Activated CD4-positive, alpha-beta T cell treated with anti-CD3 and anti-CD28 coated beads, Interleukin-2, amount 10 ng/mL, durations not matched to agents 7 days and 5 days (primary cell): ENCODE measurements at regions of chr15 and their contacts with region 1.

Region 1: DNA sequence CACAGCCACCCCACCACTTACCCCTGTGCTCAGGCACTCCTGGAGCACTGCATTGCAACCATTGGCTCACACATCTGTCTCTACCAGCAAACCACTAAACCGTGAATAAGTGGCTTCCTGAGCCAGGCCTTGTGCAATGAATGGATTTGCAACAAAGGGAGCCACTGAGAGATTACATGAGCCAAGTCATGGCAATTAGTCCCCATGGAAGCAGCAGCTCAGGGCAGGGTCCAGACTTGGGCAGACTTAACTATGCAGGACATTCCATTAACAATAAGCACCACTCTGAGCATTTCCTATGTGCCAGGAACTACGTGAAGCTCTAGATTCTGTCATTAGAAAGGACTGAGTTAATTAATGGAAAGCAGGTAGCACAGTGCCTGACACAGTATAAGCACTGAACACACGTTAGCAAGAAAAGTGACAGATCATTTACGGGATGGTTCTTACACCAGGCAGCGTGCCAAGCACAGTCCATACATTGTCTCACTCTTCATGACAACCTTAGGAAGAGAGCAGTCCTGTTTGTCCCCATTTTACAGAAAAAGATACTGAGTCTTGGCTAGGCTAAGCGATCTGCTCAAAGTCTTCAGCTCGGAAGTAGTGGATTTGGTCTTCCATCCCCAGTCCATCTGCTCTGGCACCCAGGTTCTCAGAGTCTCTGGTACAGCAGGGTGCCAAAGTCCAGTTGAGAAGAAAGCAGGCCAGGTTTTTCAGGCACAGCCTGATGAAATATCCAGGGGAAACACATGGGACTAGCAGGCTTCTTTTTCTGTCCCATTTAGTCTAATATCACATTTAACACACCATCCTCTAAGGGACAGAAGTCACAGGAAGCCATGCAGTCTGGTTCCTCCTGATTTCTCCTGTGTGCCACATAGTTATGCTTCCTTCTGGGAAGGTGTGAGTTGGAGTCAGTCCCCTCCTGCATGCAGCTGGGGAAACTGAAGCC is 44.1 kb downstream of the LIPC start:
- DNase-seq: no peak
- H3K4me3 Mint-ChIP-seq: no peak overlapping the region
- H3K27ac Mint-ChIP-seq: peak overlapping the region; percentile 79
- H3K4me1 Mint-ChIP-seq: peaks cover 61% of the 10 kb centered on the region
- H3K27me3 Mint-ChIP-seq: no peaks in the 10 kb centered on the region

Region 2: GRCh38 chr15:58447271-58448010 is 28.4 kb before region 1 on chr15:
- CTCF ChIA-PET with region 1: no interaction called
- POLR2A ChIA-PET with region 1: no interaction called
- DNase-seq: no peak
- H3K4me3 Mint-ChIP-seq: no peak overlapping the region
- H3K27ac Mint-ChIP-seq: peak overlapping the region; percentile 60
- H3K4me1 Mint-ChIP-seq: peaks cover 21% of the 10 kb centered on the region
- H3K27me3 Mint-ChIP-seq: no peaks in the 10 kb centered on the region

Region 3: GRCh38 chr15:58462547-58462946 is 13.3 kb before region 1 on chr15:
- CTCF ChIA-PET with region 1: interaction called, 15 read pairs
- POLR2A ChIA-PET with region 1: no interaction called
- DNase-seq: no peak
- H3K4me3 Mint-ChIP-seq: no peak overlapping the region
- H3K27ac Mint-ChIP-seq: no peak overlapping the region
- H3K4me1 Mint-ChIP-seq: peaks cover 59% of the 10 kb centered on the region
- H3K27me3 Mint-ChIP-seq: no peaks in the 10 kb centered on the region

Region 4: DNA sequence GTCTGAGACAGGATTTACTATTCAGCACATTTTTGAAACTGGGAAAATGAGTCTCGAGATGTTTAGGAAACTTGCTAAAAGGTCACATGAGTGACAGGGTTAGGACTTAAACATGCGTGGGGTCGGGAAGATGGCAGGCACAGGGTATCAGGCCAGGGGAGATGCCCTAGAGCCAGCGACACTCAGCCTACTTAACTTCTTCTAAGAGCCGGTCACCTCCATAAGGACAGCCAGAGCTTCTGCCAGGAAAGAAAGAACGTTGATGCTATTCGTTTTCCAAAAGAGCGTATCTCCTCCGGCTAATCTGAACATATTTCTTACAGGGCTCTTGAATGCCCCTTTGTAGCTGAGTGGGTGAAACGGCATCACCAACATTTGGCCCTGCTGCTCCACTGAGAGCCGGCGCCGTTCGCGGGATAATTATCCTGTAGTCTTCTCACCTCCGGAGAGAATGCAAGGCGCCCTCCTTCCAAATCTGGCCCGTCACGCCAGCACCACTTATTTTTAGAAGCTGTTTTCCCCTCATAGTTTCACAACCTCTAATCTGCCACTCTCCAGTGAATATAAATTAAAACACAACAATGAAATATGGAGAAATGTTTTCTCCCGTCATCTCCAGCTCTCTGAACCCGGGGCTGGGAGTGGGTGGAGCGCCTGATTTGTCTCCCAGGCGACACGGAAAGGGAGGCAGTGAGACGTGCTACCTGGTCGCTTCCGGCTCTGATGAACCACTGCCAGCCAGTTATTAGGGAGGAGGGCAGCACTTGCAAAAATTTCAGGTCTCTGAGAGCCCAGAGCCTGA is 14.4 kb after region 1 on chr15:
- CTCF ChIA-PET with region 1: interaction called, 11 read pairs
- POLR2A ChIA-PET with region 1: no interaction called
- DNase-seq: no peak
- H3K4me3 Mint-ChIP-seq: no peak overlapping the region
- H3K27ac Mint-ChIP-seq: no peak overlapping the region
- H3K4me1 Mint-ChIP-seq: peaks cover 43% of the 10 kb centered on the region
- H3K27me3 Mint-ChIP-seq: no peaks in the 10 kb centered on the region

Region 5: GRCh38 chr15:58535894-58536293 is 60.0 kb after region 1 on chr15:
- CTCF ChIA-PET with region 1: no interaction called
- POLR2A ChIA-PET with region 1: no interaction called
- DNase-seq: no peak
- H3K4me3 Mint-ChIP-seq: no peak overlapping the region
- H3K27ac Mint-ChIP-seq: no peak overlapping the region
- H3K4me1 Mint-ChIP-seq: no peaks in the 10 kb centered on the region
- H3K27me3 Mint-ChIP-seq: peaks cover 10% of the 10 kb centered on the region